CD4-positive, alpha-beta T cell (primary cell): ENCODE measurements at regions of chr5 and their contacts with region 1.

Region 1: GRCh38 chr5:16326137-16326536 is 139.5 kb downstream of the ZNF622 start:
- DNase-seq: no peak
- ATAC-seq: no peak
- H3K4me3 ChIP-seq: no peak overlapping the region
- H3K4me3 Mint-ChIP-seq: no peak overlapping the region
- H3K27ac ChIP-seq: no peak overlapping the region
- H3K27ac Mint-ChIP-seq: no peak overlapping the region
- H3K4me1 ChIP-seq: no peaks in the 10 kb centered on the region
- H3K4me1 Mint-ChIP-seq: no peaks in the 10 kb centered on the region
- H3K27me3 ChIP-seq: peaks cover 0 to 4% of the 10 kb centered on the region in 2 experiments
- H3K27me3 Mint-ChIP-seq: peaks cover 26% of the 10 kb centered on the region
- CTCF ChIP-seq: no peak

Region 2: DNA sequence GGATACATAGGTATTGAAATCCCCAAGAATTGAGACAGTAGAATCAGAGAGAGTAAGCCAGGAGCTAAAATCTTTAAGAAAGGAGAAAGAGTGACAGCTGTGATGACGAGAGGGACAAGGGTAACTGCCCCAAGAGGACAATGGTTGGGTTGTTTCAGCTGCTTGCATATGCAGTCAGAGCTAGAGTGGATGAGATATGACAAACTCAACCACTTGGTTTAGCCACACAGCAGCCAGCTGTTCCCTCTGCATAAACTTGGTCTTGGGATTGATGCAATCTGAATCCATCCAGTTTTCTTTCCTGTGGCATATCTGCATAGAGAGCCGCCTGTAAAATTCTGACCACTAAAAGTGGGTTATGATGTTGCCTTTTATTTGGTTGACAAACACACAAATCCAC is 38.8 kb after region 1 on chr5:
- CTCF ChIA-PET with region 1: no interaction called
- POLR2A ChIA-PET with region 1: no interaction called
- intact Hi-C with region 1: no loop called
- DNase-seq: no peak
- ATAC-seq: no peak
- H3K4me3 ChIP-seq: no peak overlapping the region
- H3K4me3 Mint-ChIP-seq: no peak overlapping the region
- H3K27ac ChIP-seq: no peak overlapping the region
- H3K27ac Mint-ChIP-seq: no peak overlapping the region
- H3K4me1 ChIP-seq: no peaks in the 10 kb centered on the region
- H3K4me1 Mint-ChIP-seq: no peaks in the 10 kb centered on the region
- H3K27me3 ChIP-seq: no peaks in the 10 kb centered on the region
- H3K27me3 Mint-ChIP-seq: peaks cover 7% of the 10 kb centered on the region
- CTCF ChIP-seq: no peak

Region 3: GRCh38 chr5:16465544-16466466 is 139.7 kb after region 1 on chr5 and contains the start of gene ZNF622:
- CTCF ChIA-PET with region 1: no interaction called
- POLR2A ChIA-PET with region 1: no interaction called
- intact Hi-C with region 1: no loop called
- DNase-seq: peak; percentile 76 to 95 (median 85)
- ATAC-seq: peak; percentile 93
- H3K4me3 ChIP-seq: peak within 1 kb of the TSS; percentile 82
- H3K4me3 Mint-ChIP-seq: peak within 1 kb of the TSS; percentile 98
- H3K27ac ChIP-seq: peak within 1 kb of the TSS; percentile 63 to 79
- H3K27ac Mint-ChIP-seq: peak within 1 kb of the TSS; percentile 95
- H3K4me1 ChIP-seq: peaks cover 53% of the 10 kb centered on the region
- H3K4me1 Mint-ChIP-seq: peaks cover 96% of the 10 kb centered on the region
- H3K27me3 ChIP-seq: no peaks in the 10 kb centered on the region
- H3K27me3 Mint-ChIP-seq: no peaks in the 10 kb centered on the region
- CTCF ChIP-seq: no peak
- total RNA-seq, gene ZNF622: 52.5 to 54.1 TPM

Region 4: GRCh38 chr5:16639206-16639605 is 313.1 kb after region 1 on chr5:
- CTCF ChIA-PET with region 1: no interaction called
- POLR2A ChIA-PET with region 1: no interaction called
- intact Hi-C with region 1: no loop called
- DNase-seq: no peak
- ATAC-seq: no peak
- H3K4me3 ChIP-seq: no peak overlapping the region
- H3K4me3 Mint-ChIP-seq: no peak overlapping the region
- H3K27ac ChIP-seq: no peak overlapping the region
- H3K27ac Mint-ChIP-seq: no peak overlapping the region
- H3K4me1 ChIP-seq: peaks cover 3% of the 10 kb centered on the region
- H3K4me1 Mint-ChIP-seq: peaks cover 7% of the 10 kb centered on the region
- H3K27me3 ChIP-seq: no peaks in the 10 kb centered on the region
- H3K27me3 Mint-ChIP-seq: no peaks in the 10 kb centered on the region
- CTCF ChIP-seq: no peak

Region 5: DNA sequence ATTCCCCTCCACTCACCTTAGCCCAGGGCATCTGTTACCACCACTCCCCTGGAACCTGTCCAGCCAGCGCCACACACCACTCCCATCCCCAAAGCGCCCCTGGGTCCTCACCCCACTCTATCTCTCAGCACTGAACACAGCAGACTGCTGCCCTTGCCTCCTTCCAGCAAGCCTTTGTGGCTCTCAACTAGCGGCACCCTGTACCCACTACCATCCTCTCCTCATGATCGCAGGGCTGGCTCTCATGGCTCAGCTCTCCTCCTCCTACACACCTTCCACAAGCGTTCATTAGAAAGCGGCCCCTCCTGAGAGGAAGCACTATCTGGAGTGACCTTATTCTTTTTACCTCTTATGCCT is 878.0 kb after region 1 on chr5:
- CTCF ChIA-PET with region 1: no interaction called
- POLR2A ChIA-PET with region 1: no interaction called
- intact Hi-C with region 1: loop called in 1 of 2 experiments (anchors 10 kb)
- DNase-seq: no peak
- ATAC-seq: no peak
- H3K4me3 ChIP-seq: no peak overlapping the region
- H3K4me3 Mint-ChIP-seq: no peak overlapping the region
- H3K27ac ChIP-seq: no peak overlapping the region
- H3K27ac Mint-ChIP-seq: no peak overlapping the region
- H3K4me1 ChIP-seq: no peaks in the 10 kb centered on the region
- H3K4me1 Mint-ChIP-seq: no peaks in the 10 kb centered on the region
- H3K27me3 ChIP-seq: peaks cover 0 to 2% of the 10 kb centered on the region in 2 experiments
- H3K27me3 Mint-ChIP-seq: peaks cover 24% of the 10 kb centered on the region
- CTCF ChIP-seq: no peak